H1 (cell line): ENCODE measurements at regions of chr3 and their contacts with region 1.

Region 1: DNA sequence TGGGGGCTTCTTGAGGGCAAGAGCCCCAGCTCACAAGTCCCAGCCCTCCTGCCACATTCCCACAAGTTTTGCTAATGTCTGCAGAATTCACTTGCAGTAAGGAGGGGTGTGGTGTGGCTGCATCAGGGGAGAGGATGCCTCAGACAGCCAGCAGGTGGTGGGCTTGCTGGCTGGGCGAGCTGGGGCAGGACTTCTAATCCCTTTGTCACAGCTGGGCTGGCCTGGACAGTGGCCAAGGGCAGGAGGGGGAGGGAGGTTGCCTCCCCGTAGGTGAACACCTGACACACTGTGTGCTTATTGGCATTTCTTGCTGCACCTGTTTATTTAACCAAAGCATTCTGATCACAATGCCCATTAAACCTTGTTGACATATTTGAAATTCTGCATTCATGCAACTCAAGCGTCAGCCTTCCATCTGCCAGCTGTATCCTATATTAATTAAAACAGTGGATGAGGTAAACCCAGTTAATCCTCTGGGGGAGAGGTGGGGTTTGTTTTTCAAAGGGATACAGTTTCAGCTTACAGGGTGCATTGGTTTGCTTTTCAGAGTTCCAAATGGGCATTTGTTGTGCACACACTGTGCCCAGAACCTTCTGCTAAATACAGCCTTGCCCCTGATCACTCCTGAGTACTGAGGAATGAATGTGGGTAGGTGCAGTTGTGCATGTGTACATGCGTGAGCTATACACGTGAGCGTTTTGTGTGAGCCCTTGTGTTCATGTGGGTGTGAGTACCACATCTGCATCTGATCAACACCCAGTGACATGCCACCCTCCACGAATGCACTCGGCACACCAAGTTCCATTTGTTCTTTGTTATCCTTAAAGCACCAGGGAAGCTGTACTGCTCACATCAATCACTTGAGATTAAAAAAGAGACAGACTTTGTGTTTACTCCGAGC is 268.7 kb downstream of the XXYLT1 start:
- DNase-seq: peak; percentile 38 to 59
- H3K4me3 ChIP-seq: no peak overlapping the region
- H3K27ac ChIP-seq: no peak overlapping the region
- H3K4me1 ChIP-seq: no peaks in the 10 kb centered on the region; a peak in 3 of 7 replicates
- H3K27me3 ChIP-seq: no peaks in the 10 kb centered on the region
- CTCF ChIP-seq: peak; percentile 71 to 89 (median 80)
- EP300 ChIP-seq: no peak
- POLR2A ChIP-seq: no peak
- RAD21 ChIP-seq: peak; percentile 71 to 79

Region 2: GRCh38 chr3:194985031-194985578 is 17.1 kb before region 1 on chr3:
- CTCF ChIA-PET with region 1: interaction called, 16 read pairs
- POLR2A ChIA-PET with region 1: interaction called, 3 read pairs
- DNase-seq: peak; percentile 75 to 82
- H3K4me3 ChIP-seq: peak overlapping the region in 3 of 4 experiments; percentile 11 to 40 (median 23); a peak in 5 of 8 replicates
- H3K27ac ChIP-seq: no peak overlapping the region
- H3K4me1 ChIP-seq: peaks cover 0 to 7% (median 5%) of the 10 kb centered on the region in 4 experiments; a peak in 3 of 7 replicates
- H3K27me3 ChIP-seq: peaks cover 0 to 7% (median 2%) of the 10 kb centered on the region in 4 experiments; a peak in 2 of 7 replicates
- CTCF ChIP-seq: peak; percentile 52 to 88 (median 75)
- EP300 ChIP-seq: no peak
- POLR2A ChIP-seq: 0 out of 3 replicates have a peak, but pooled peaks of 1 of the 2 experiments have one; percentile 30
- RAD21 ChIP-seq: peak; percentile 65 to 70

Region 3: GRCh38 chr3:195015021-195015420 is 12.8 kb after region 1 on chr3:
- CTCF ChIA-PET with region 1: interaction called, 11 read pairs
- POLR2A ChIA-PET with region 1: interaction called, 3 read pairs
- DNase-seq: no peak
- H3K4me3 ChIP-seq: no peak overlapping the region
- H3K27ac ChIP-seq: no peak overlapping the region
- H3K4me1 ChIP-seq: peaks cover 0 to 6% (median 2%) of the 10 kb centered on the region in 4 experiments; a peak in 4 of 7 replicates
- H3K27me3 ChIP-seq: no peaks in the 10 kb centered on the region; a peak in 1 of 7 replicates
- CTCF ChIP-seq: no peak
- EP300 ChIP-seq: no peak
- POLR2A ChIP-seq: no peak
- RAD21 ChIP-seq: no peak

Region 4: GRCh38 chr3:195040773-195041520 is 38.7 kb after region 1 on chr3:
- CTCF ChIA-PET with region 1: interaction called, 10 read pairs
- POLR2A ChIA-PET with region 1: no interaction called
- DNase-seq: no peak
- H3K4me3 ChIP-seq: no peak overlapping the region
- H3K27ac ChIP-seq: no peak overlapping the region
- H3K4me1 ChIP-seq: peaks cover 6 to 21% (median 14%) of the 10 kb centered on the region in 4 experiments
- H3K27me3 ChIP-seq: 0 out of 7 replicates have a peak, but pooled peaks cover 0 to under 1% (median under 1%) of the 10 kb centered on the region in 4 experiments
- CTCF ChIP-seq: no peak
- EP300 ChIP-seq: no peak
- POLR2A ChIP-seq: no peak
- RAD21 ChIP-seq: no peak